ENCODE measurements at regions of chr13 and their contacts with region 1.

Region 1: GRCh38 chr13:43905435-43906031 is 25.8 kb downstream of the LACC1 start:
- DNase-seq: no peak
- H3K4me3 ChIP-seq: no peak overlapping the region
- H3K27ac ChIP-seq: no peak overlapping the region
- H3K4me1 ChIP-seq: peaks cover 10 to 25% (median 18%) of the 10 kb centered on the region in 4 donors
- H3K27me3 ChIP-seq: no peaks in the 10 kb centered on the region
- CTCF ChIP-seq: peak; percentile 83 to 88 (median 86)
- EP300 ChIP-seq: no peak
- POLR2A ChIP-seq: no peak

Region 2: GRCh38 chr13:43792076-43792881 is 113.3 kb before region 1 on chr13:
- intact Hi-C with region 1: no loop called
- DNase-seq: no peak
- H3K4me3 ChIP-seq: no peak overlapping the region
- H3K27ac ChIP-seq: no peak overlapping the region
- H3K4me1 ChIP-seq: peaks cover 4 to 12% (median 11%) of the 10 kb centered on the region in 4 donors
- H3K27me3 ChIP-seq: no peaks in the 10 kb centered on the region
- CTCF ChIP-seq: no peak
- EP300 ChIP-seq: no peak
- POLR2A ChIP-seq: no peak

Region 3: GRCh38 chr13:44050450-44051063 is 145.0 kb after region 1 on chr13:
- intact Hi-C with region 1: loop called (anchors 5 kb)
- DNase-seq: no peak
- H3K4me3 ChIP-seq: no peak overlapping the region
- H3K27ac ChIP-seq: peak overlapping the region in 1 of 4 donors; percentile 46
- H3K4me1 ChIP-seq: peaks cover 8 to 35% (median 34%) of the 10 kb centered on the region in 4 donors
- H3K27me3 ChIP-seq: no peaks in the 10 kb centered on the region
- CTCF ChIP-seq: peak; percentile 81 to 86 (median 85)
- EP300 ChIP-seq: no peak
- POLR2A ChIP-seq: no peak

Region 4: GRCh38 chr13:44188257-44188656 is 282.7 kb after region 1 on chr13:
- intact Hi-C with region 1: loop called (anchors 10 kb)
- DNase-seq: no peak
- H3K4me3 ChIP-seq: no peak overlapping the region
- H3K27ac ChIP-seq: no peak overlapping the region
- H3K4me1 ChIP-seq: peaks cover 0 to 10% (median 6%) of the 10 kb centered on the region in 4 donors
- H3K27me3 ChIP-seq: no peaks in the 10 kb centered on the region
- CTCF ChIP-seq: no peak
- EP300 ChIP-seq: no peak
- POLR2A ChIP-seq: no peak

Region 5: DNA sequence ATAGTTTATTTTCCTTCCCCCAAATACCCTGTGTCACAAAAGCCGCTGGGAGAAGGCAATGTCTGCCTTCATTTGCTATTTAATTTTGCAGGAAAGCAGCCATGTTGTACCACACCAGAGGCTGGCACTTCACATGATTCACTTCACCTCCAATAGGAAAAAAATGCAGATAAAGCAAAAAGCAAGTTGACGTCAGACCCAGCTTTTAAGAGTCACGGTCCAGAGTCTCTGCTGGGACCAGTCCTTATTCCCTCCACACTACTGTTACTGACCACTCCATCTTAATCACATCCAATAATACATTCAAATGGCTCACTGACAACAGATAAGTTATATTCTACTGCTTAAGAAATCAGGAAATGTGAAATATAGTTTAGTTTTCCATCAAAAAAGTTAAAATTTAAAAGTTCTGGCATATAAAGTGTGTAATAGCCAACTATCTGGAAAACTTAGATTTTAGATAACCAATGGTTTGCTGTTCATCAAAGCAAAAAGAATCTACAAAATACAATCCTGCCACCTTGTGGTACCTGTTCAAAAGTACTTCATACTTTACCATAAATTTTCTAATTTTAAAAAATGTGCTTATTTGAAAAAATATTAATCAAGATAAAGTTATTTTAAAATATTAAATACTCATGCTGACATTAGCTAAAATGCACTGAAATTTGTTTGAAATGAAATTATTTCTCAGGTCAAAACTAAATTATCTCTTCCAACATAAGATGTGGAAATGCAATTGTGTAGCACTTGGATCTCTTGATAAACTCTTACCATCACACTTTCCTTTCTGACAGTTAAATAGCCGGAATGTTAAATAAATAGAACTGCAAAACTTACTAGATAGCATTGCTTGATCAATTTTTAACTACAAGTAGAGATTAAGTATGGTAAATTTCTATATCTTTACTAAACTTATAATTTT is 565.4 kb after region 1 on chr13:
- intact Hi-C with region 1: loop called (anchors 5 kb)
- DNase-seq: no peak
- H3K4me3 ChIP-seq: no peak overlapping the region
- H3K27ac ChIP-seq: no peak overlapping the region
- H3K4me1 ChIP-seq: peaks cover 0 to 49% (median 40%) of the 10 kb centered on the region in 4 donors
- H3K27me3 ChIP-seq: no peaks in the 10 kb centered on the region
- CTCF ChIP-seq: peak; percentile 45 to 63 (median 54)
- EP300 ChIP-seq: no peak
- POLR2A ChIP-seq: no peak

Region 6: GRCh38 chr13:44969551-44970484 is 1064.3 kb after region 1 on chr13:
- intact Hi-C with region 1: loop called (anchors 5 kb)
- DNase-seq: no peak
- H3K4me3 ChIP-seq: no peak overlapping the region
- H3K27ac ChIP-seq: peak overlapping the region; percentile 68 to 80 (median 78)
- H3K4me1 ChIP-seq: peaks cover 16 to 45% (median 30%) of the 10 kb centered on the region in 4 donors
- H3K27me3 ChIP-seq: no peaks in the 10 kb centered on the region
- CTCF ChIP-seq: peak; percentile 82 to 90 (median 85)
- EP300 ChIP-seq: no peak
- POLR2A ChIP-seq: no peak

Measured in esophagus muscularis mucosa (tissue), 4 donors.